Gastrocnemius medialis (tissue), 4 donors: ENCODE measurements at regions of chr12 and their contacts with region 1.

Region 1: GRCh38 chr12:103965590-103966504 is at the start of gene TDG:
- DNase-seq: peak; percentile 98 to 99
- ATAC-seq: peak; percentile 99 to 100
- H3K4me3 ChIP-seq: peak within 1 kb of the TSS; percentile 74 to 97 (median 88)
- H3K27ac ChIP-seq: peak within 1 kb of the TSS; percentile 90 to 97 (median 95)
- H3K4me1 ChIP-seq: peaks cover 33 to 46% of the 10 kb centered on the region in 2 donors
- H3K27me3 ChIP-seq: no peaks in the 10 kb centered on the region
- CTCF ChIP-seq: peak in 4 of 5 experiments; percentile 26 to 43 (median 35)
- POLR2A ChIP-seq: peak; percentile 86 to 88
- total RNA-seq, gene TDG: 5.1 to 17.5 (median 9.0) TPM

Region 2: DNA sequence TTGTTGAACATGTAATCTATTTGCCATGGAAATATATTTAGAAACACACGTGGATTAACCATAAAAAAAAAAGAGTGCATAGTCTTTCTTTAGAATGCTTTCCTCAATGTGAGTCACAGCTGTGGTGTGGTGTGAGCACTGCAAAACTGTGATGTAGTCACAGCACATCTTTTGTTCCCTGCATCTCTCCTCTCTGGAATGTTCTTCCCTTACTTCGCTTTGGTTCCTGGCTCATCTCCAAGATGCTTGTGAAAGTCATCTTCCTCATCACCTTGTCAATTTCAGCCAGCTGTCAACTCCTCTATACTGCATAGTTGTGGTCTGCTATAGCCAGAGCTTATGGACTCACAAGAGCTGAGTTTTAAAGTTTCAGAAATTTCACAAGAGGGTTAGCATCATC is 318.6 kb before region 1 on chr12:
- in situ Hi-C with region 1: no loop called
- intact Hi-C with region 1: no loop called
- DNase-seq: no peak
- ATAC-seq: no peak
- H3K4me3 ChIP-seq: no peak overlapping the region
- H3K27ac ChIP-seq: no peak overlapping the region
- H3K4me1 ChIP-seq: no peaks in the 10 kb centered on the region
- H3K27me3 ChIP-seq: no peaks in the 10 kb centered on the region
- CTCF ChIP-seq: no peak
- POLR2A ChIP-seq: no peak

Region 3: DNA sequence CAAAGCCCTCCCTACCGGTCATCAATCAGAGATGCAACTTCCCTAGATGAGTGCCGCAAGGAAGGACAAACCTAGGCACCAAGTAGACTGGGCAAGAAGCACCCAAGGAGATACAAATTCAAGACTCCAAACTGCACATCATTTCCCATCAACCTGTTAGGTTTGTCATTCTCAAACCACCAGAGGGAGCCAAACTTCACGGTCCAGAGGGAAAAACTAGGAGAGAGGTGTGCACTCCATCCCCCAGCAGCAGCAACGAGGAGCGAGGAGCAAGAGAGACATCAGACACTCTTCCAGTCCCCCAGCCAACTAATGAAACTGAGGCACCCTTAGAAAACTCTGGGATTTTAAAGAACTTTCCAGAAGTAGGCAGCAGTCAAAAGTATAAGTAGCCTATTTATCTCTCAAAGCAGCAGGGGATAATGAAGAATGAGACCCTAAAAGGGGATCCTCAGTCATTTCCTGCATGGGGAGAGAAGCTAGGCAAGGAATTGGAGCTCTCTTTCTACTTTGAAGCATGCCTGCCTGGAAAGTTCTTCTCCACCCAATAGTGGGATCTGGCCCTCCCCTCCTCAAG is 87.8 kb before region 1 on chr12:
- in situ Hi-C with region 1: no loop called
- intact Hi-C with region 1: loop called (anchors 5 kb)
- DNase-seq: peak; percentile 29 to 41
- ATAC-seq: peak; percentile 85 to 90
- H3K4me3 ChIP-seq: no peak overlapping the region
- H3K27ac ChIP-seq: no peak overlapping the region
- H3K4me1 ChIP-seq: no peaks in the 10 kb centered on the region
- H3K27me3 ChIP-seq: no peaks in the 10 kb centered on the region
- CTCF ChIP-seq: peak; percentile 46 to 77 (median 62)
- POLR2A ChIP-seq: no peak

Region 4: GRCh38 chr12:104011261-104011660 is 45.4 kb after region 1 on chr12:
- in situ Hi-C with region 1: no loop called
- intact Hi-C with region 1: loop called (anchors 2 kb)
- DNase-seq: peak; percentile 27 to 44
- ATAC-seq: peak; percentile 99 to 100
- H3K4me3 ChIP-seq: no peak overlapping the region
- H3K27ac ChIP-seq: peak overlapping the region; percentile 41 to 72 (median 52)
- H3K4me1 ChIP-seq: peaks cover 11 to 17% of the 10 kb centered on the region in 2 donors
- H3K27me3 ChIP-seq: no peaks in the 10 kb centered on the region
- CTCF ChIP-seq: no peak
- POLR2A ChIP-seq: no peak

Region 5: DNA sequence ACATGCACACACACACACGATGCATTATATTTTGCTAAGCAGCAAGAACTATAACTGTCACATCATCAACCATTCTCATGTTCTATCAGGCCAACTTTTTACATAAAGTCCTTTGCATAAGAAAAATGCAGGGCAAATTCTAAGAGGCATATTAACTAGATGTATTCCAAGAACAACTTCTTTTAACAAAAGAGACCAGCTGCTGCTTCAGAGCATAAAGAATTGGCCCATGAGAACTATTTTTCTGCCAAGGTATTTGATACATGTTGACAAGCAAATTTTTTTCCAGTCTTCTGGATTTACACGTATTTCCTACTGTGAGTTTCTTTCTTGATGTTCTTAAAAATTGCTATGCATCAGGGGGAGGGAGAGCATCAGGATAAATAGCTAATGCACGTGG is 56.9 kb after region 1 on chr12:
- in situ Hi-C with region 1: no loop called
- intact Hi-C with region 1: no loop called
- DNase-seq: no peak
- ATAC-seq: no peak
- H3K4me3 ChIP-seq: no peak overlapping the region
- H3K27ac ChIP-seq: no peak overlapping the region
- H3K4me1 ChIP-seq: no peaks in the 10 kb centered on the region
- H3K27me3 ChIP-seq: peaks cover 0 to 3% (median 0%) of the 10 kb centered on the region in 3 donors
- CTCF ChIP-seq: no peak
- POLR2A ChIP-seq: no peak

Region 6: GRCh38 chr12:104079024-104079423 is 113.2 kb after region 1 on chr12:
- in situ Hi-C with region 1: no loop called
- intact Hi-C with region 1: no loop called
- DNase-seq: no peak
- ATAC-seq: no peak
- H3K4me3 ChIP-seq: no peak overlapping the region
- H3K27ac ChIP-seq: no peak overlapping the region
- H3K4me1 ChIP-seq: no peaks in the 10 kb centered on the region
- H3K27me3 ChIP-seq: no peaks in the 10 kb centered on the region
- CTCF ChIP-seq: no peak
- POLR2A ChIP-seq: no peak

Region 7: DNA sequence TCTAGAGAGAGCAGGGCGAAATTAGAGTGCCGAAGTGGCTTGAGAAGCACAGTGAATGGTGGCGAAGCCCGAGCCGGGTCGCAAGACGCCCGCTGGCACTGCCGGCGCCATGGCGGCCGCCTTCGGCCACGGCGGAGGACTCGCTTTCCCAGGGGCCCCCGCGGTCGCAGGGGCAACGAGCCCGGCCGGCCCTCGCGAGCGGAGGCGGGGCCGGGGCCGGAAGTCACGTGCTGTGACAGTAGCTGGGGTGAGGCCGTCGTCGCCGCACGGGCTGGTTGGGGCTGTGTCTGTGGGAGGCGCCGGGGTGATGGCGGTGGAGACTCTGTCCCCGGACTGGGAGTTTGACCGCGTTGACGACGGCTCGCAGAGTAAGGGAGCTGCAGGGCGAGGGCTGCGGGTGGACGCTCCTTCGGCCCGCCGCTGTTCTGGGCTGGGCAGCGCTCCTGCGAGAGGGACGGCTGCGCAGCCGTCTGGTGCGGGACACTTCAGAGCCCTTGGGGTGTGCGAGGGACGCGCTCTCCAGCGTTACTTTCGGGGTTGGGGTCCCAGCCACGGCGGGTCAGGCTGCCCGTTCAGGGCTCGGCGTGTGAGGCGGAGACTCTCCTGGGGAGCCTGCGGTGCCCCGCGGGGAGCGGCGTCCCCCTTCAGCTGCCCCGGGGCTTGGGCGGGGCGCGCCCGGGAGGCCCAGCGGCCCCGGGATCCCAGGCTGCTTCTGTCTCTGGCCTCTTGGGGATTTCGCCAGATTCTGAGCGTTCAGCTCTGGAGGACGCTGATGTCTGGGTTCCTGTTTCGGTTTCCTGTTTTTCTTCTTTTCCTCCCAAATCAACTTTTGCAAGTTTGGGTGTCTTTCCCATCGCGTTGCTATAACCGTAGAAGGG is 1141.9 kb after region 1 on chr12 and contains the start of gene WASHC4:
- in situ Hi-C with region 1: loop called in 1 of 4 experiments (anchors 25 kb)
- intact Hi-C with region 1: no loop called
- DNase-seq: peak; percentile 90
- ATAC-seq: peak; percentile 94 to 96
- H3K4me3 ChIP-seq: peak within 1 kb of the TSS; percentile 91 to 95 (median 93)
- H3K27ac ChIP-seq: peak within 1 kb of the TSS; percentile 92 to 98 (median 96)
- H3K4me1 ChIP-seq: peaks cover 30 to 32% of the 10 kb centered on the region in 2 donors
- H3K27me3 ChIP-seq: no peaks in the 10 kb centered on the region
- CTCF ChIP-seq: peak in 1 of 5 experiments; percentile 16
- POLR2A ChIP-seq: peak; percentile 96 to 97
- total RNA-seq, gene WASHC4: 23.6 to 53.2 (median 36.7) TPM